ENCODE measurements at regions of chr18 and their contacts with region 1.

Region 1: DNA sequence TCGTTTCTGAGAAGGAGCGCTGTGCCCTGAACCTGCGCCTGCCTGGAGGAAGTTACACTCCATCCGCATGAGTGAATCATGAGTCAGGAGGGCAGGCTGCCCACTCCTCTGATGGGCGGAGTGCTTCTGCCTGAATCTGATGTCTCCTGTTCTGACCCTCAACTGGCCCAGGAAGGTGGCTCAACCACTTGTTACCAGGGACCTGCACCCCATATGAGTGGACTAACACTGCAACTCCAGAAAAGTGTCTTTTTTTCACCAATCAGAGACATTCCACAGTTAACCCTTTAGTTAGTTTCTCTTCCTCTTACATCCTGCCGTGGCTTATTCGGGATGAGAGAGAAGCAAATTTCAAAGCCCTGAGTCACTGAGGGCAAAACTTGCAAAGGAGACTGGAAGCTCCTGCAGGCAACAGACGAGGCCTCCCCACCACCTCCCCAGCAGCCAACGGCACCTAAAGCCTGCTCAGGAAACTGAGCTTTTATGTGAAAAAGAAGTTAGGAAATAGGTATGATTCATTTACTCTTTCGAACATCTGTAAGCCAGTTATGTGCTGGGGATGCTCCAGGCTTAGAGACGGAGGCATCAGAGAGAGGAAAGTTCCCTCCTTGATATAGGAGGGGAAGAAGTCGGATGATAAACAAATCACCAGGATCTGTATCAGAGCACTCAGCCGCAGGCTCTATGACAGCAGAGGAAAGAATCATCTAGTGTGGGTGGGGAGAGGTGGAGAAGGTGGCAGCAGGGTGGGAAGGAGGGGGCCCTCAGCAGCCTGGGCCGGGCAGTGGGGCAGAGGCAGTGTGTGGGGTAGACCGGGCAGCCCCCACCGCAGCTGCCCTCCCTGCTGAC is 30.9 kb downstream of the MBP start:
- DNase-seq: peak in 2 of 9 donors; percentile 26 to 73
- ATAC-seq: peak; percentile 62
- H3K4me3 ChIP-seq: peak overlapping the region; percentile 45
- H3K4me3 Mint-ChIP-seq: peak overlapping the region; percentile 65 to 92 (median 82)
- H3K27ac ChIP-seq: peak overlapping the region; percentile 73
- H3K27ac Mint-ChIP-seq: peak overlapping the region; percentile 94 to 99 (median 98)
- H3K4me1 ChIP-seq: peaks cover 88 to 94% of the 10 kb centered on the region in 2 donors
- H3K4me1 Mint-ChIP-seq: peaks cover 71 to 100% (median 94%) of the 10 kb centered on the region in 7 donors
- H3K27me3 ChIP-seq: no peaks in the 10 kb centered on the region
- H3K27me3 Mint-ChIP-seq: no peaks in the 10 kb centered on the region

Region 2: GRCh38 chr18:76626991-76627390 is 474.6 kb before region 1 on chr18:
- CTCF ChIA-PET with region 1: no interaction called
- POLR2A ChIA-PET with region 1: no interaction called
- intact Hi-C with region 1: no loop called
- DNase-seq: no peak
- ATAC-seq: no peak
- H3K4me3 ChIP-seq: no peak overlapping the region
- H3K4me3 Mint-ChIP-seq: no peak overlapping the region
- H3K27ac ChIP-seq: no peak overlapping the region
- H3K27ac Mint-ChIP-seq: no peak overlapping the region
- H3K4me1 ChIP-seq: no peaks in the 10 kb centered on the region
- H3K4me1 Mint-ChIP-seq: no peaks in the 10 kb centered on the region
- H3K27me3 ChIP-seq: no peaks in the 10 kb centered on the region
- H3K27me3 Mint-ChIP-seq: peaks cover 14 to 31% (median 17%) of the 10 kb centered on the region in 5 donors

Region 3: DNA sequence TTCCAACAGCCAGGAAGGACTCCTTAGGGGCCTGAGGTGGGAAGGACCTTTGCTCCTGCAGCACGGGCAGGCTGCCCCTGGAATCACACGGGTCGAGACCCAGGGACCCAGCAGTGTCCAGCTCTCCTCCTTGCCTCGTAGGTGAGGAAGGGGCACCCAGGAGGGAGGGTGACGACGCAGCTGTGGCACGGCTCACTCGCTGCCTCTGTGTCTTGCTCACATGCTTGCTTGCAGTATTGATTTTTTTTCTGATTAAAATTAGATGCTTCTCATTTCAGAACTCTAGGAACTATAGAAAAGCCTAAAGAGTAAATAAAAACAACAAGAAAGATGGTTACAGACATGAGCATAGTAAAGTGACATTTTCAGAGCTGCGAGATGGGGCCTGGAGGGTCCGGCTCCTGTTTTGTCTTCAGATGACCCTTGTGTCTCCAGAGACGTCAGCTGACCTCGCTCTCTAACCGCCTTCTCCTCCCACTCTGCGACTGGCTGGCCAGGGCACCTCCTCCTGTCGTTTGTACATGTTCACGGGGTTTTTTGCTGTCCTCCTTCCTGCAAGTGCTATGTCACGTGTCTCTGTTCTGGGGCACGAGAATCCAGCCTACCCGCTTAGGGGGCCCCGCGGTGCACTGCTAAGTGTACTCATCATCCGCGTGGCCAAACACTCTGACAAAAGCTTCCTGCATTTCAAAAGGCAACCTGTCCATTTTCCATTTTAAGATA is 344.9 kb before region 1 on chr18:
- CTCF ChIA-PET with region 1: no interaction called
- POLR2A ChIA-PET with region 1: no interaction called
- intact Hi-C with region 1: no loop called
- DNase-seq: no peak
- ATAC-seq: no peak
- H3K4me3 ChIP-seq: no peak overlapping the region
- H3K4me3 Mint-ChIP-seq: no peak overlapping the region
- H3K27ac ChIP-seq: no peak overlapping the region
- H3K27ac Mint-ChIP-seq: no peak overlapping the region
- H3K4me1 ChIP-seq: peaks cover 0 to 4% of the 10 kb centered on the region in 2 donors
- H3K4me1 Mint-ChIP-seq: peaks cover 3 to 8% (median 5%) of the 10 kb centered on the region in 7 donors
- H3K27me3 ChIP-seq: no peaks in the 10 kb centered on the region
- H3K27me3 Mint-ChIP-seq: peaks cover 0 to 17% (median 0%) of the 10 kb centered on the region in 5 donors

Region 4: DNA sequence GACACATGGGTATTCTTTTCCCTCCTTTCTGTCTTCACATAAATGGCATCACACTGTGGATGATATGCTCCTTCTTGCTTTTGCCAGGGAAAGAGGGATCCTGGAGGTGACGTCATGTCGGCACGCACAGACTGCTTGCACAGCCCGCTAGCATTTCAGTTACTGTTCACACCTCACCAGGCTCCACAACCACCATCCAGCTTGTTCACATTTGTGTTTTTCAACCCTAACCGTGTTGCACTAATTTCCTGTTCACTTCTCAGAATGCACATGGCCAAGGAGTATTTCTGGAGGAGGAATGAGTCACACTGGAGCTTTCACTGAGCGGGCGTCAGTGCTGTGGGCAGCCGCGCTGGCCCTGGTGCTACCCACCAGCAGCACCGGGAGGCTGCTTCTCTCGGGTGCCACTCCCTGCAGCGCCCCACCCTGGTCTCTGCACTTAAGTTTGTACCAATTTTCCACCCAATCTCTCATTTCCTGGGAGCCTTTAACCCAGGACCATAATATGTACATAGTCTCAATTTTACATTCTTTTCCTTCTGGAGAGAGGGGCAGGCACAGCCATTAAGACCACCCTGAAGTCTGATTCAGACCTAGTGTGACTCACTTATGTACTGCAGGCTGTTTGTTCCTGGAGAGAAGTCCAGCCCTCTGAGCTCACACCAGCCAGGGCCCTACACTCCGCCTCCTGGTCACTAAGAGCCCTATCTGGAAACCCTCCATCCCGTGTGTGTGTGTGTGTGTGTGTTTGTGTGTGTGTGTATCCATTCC is 34.2 kb before region 1 on chr18:
- CTCF ChIA-PET with region 1: interaction called, 3 read pairs
- POLR2A ChIA-PET with region 1: interaction called, 14 read pairs
- intact Hi-C with region 1: loop called (anchors 1 kb)
- DNase-seq: peak in 1 of 9 donors; percentile 74
- ATAC-seq: peak; percentile 60
- H3K4me3 ChIP-seq: peak overlapping the region; percentile 35
- H3K4me3 Mint-ChIP-seq: peak overlapping the region; percentile 54 to 85 (median 70)
- H3K27ac ChIP-seq: peak overlapping the region; percentile 52
- H3K27ac Mint-ChIP-seq: peak overlapping the region; percentile 88 to 100 (median 97)
- H3K4me1 ChIP-seq: peaks cover 85 to 100% of the 10 kb centered on the region in 2 donors
- H3K4me1 Mint-ChIP-seq: peaks cover 70 to 100% (median 96%) of the 10 kb centered on the region in 7 donors
- H3K27me3 ChIP-seq: no peaks in the 10 kb centered on the region
- H3K27me3 Mint-ChIP-seq: no peaks in the 10 kb centered on the region

Region 5: DNA sequence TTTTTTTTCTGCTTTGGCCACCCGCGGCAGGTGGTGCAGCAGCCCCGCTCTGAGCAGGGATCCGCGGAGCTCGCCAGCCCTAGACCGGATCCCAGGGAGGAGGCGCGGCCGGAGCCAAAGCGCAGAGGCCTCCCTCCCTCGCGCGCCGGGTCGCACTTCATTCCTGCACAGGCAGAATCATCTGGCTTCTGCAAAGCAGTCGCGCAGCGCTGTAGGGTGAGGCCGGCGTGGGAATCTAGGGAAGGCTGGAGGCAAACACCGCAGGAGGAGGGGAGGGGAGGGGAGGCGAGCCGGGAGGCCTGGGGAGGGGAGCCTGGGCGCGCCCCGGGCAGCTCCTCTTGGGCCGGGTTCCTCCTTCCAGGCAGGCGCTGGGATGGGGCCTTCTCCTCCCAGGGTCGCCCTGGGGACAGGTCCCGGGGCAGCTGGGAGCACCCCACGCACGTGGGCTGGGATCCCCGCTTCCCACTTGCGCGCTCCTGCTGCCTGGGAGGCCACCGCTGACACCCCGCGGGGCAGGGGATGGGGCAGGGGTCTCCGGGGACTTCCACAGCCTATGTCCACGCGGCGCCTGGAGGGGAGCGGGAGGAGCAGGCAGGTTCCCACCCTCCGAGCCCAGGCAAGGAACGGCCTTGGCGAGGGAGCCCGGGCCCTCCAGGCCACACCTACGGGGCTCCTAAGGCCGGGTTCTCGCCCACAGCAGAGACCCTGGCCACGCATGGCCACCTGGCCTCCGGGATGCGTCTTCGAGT is 14.1 kb before region 1 on chr18:
- CTCF ChIA-PET with region 1: no interaction called
- POLR2A ChIA-PET with region 1: interaction called, 5 read pairs
- intact Hi-C with region 1: loop called in 1 of 2 experiments (anchors 2 kb)
- DNase-seq: no peak
- ATAC-seq: no peak
- H3K4me3 ChIP-seq: no peak overlapping the region
- H3K4me3 Mint-ChIP-seq: no peak overlapping the region
- H3K27ac ChIP-seq: no peak overlapping the region
- H3K27ac Mint-ChIP-seq: no peak overlapping the region
- H3K4me1 ChIP-seq: peaks cover 25 to 33% of the 10 kb centered on the region in 2 donors
- H3K4me1 Mint-ChIP-seq: peaks cover 54 to 84% (median 81%) of the 10 kb centered on the region in 7 donors
- H3K27me3 ChIP-seq: no peaks in the 10 kb centered on the region
- H3K27me3 Mint-ChIP-seq: no peaks in the 10 kb centered on the region

Region 6: GRCh38 chr18:77124452-77124922 is 22.9 kb after region 1 on chr18:
- CTCF ChIA-PET with region 1: interaction called, 16 read pairs
- POLR2A ChIA-PET with region 1: interaction called, 68 read pairs
- intact Hi-C with region 1: loop called in 1 of 2 experiments (anchors 1 kb)
- DNase-seq: peak in 2 of 9 donors; percentile 33 to 56
- ATAC-seq: peak; percentile 46
- H3K4me3 ChIP-seq: peak overlapping the region; percentile 31
- H3K4me3 Mint-ChIP-seq: peak overlapping the region; percentile 65 to 97 (median 77)
- H3K27ac ChIP-seq: peak overlapping the region; percentile 62
- H3K27ac Mint-ChIP-seq: peak overlapping the region; percentile 21 to 92 (median 81)
- H3K4me1 ChIP-seq: peaks cover 77 to 81% of the 10 kb centered on the region in 2 donors
- H3K4me1 Mint-ChIP-seq: peaks cover 70 to 100% (median 98%) of the 10 kb centered on the region in 7 donors
- H3K27me3 ChIP-seq: no peaks in the 10 kb centered on the region
- H3K27me3 Mint-ChIP-seq: no peaks in the 10 kb centered on the region

Region 7: GRCh38 chr18:77197073-77197472 is 95.4 kb after region 1 on chr18:
- CTCF ChIA-PET with region 1: no interaction called
- POLR2A ChIA-PET with region 1: no interaction called
- intact Hi-C with region 1: no loop called
- DNase-seq: no peak
- ATAC-seq: no peak
- H3K4me3 ChIP-seq: no peak overlapping the region
- H3K4me3 Mint-ChIP-seq: no peak overlapping the region
- H3K27ac ChIP-seq: no peak overlapping the region
- H3K27ac Mint-ChIP-seq: no peak overlapping the region
- H3K4me1 ChIP-seq: no peaks in the 10 kb centered on the region
- H3K4me1 Mint-ChIP-seq: peaks cover 0 to 3% (median 0%) of the 10 kb centered on the region in 7 donors
- H3K27me3 ChIP-seq: no peaks in the 10 kb centered on the region
- H3K27me3 Mint-ChIP-seq: peaks cover 0 to 18% (median 0%) of the 10 kb centered on the region in 5 donors